ENCODE measurements at regions of chr16 and their contacts with region 1.

Region 1: DNA sequence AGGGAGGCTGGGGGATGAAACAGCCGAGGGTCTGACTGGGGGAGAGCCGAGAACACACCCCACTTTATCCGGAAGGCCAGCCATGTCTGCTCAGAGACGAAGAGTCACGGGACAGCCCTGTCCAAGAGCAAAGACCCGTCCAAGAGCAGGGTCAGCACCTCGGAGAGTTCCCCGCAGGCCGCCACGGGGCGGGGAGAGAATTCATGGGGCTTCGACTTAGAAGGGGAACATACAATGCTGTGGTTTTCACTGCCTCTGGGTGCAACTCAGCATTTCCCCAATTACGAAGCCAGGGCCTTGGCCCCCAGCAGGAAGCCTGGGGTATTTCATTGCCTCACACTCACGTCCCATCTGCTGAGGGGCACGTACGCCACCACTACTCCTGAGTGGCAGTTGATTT is 59.3 kb downstream of the JPH3 start:
- DNase-seq: peak; percentile 67

Region 2: GRCh38 chr16:87316923-87317749 is 344.4 kb before region 1 on chr16 and contains the start of gene C16orf95:
- in situ Hi-C with region 1: no loop called
- DNase-seq: peak; percentile 97

Region 3: DNA sequence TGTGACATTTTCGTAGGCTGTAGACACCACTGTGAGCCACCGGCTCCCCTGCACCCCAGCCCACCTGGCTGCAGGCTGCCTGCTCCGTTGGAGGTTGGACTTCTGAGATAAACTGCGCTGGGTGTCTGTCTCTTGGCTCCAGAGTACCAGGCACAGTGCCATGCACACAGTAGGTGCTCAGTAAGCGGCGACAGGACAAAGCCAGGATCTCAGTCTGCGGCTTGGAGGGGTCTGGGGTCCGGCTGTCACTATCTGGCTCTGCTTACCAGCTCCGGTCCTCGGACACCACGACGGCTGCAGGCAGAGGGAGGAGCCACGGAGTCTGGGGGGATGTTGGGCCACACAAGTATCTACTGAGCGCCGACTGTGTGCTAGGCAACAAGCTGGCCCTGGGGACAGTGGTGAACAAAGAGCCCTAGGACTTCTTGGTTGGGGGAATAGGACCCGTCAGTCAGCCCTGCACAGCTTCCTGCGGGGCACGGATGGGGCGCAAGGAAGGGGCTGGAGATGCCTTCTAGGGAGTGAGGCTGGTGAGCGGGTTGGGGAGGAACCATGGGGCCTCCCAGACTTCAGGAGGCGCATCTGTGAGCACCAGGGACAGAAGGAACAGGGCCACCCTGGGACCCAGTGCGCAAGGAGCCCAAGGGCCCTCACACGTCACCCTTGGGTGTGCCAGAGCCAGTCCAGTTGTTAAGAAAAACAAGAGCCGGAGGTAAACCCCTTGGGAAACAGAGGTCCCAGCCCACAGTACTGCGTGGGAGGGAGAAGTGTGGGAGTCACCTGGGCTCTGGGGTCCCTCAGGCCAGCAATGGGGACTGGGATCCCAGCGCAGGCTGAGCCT is 42.0 kb before region 1 on chr16:
- in situ Hi-C with region 1: loop called (anchors 10 kb)
- DNase-seq: no peak

Region 4: GRCh38 chr16:87747626-87748414 is 86.3 kb after region 1 on chr16:
- in situ Hi-C with region 1: no loop called
- DNase-seq: no peak

Measured in ACHN (cell line).